Activated CD8-positive, alpha-beta T cell treated with anti-CD3 and anti-CD28 coated beads for 36 hours (primary cell): ENCODE measurements at regions of chr12 and their contacts with region 1.

Region 1: DNA sequence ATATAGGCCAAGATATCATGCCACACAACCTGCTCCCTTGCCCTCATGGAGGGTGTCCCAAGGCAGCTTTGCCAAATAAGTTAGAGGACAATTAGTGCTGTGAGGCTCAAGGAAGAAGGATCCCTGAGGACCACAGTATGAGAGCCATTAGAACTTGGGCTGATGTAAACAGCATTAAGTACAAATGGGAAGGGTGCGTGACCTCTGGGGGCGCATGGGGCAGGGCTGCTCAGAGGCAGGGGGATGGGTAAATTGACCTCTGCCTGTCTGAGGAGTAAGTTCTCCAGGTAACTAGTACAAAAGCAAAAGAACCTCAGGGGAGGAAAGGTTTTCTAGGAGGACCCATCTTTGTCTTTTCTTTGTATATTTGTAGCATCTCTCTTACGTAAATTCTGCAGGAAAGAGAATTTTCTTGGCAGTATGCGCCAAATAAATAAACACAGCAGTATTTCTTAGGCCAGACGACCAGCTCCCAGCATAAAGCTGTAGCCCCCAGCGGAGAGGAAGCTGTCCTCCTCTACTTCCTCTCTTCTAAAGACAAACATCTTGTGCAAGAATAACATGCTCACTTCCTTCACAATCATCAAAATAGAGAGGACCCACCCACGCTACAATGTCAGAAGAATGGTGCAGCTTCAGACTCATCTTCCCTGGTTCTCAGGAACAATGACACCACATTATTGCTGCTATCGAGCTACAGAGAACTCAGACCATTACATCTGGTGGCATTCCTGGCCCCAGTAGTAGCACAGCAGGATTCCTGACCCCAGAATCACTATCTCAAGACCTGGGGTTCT is 16.4 kb upstream of the VWF start:
- DNase-seq: peak; percentile 73
- ATAC-seq: peak; percentile 75
- H3K4me3 Mint-ChIP-seq: peak overlapping the region; percentile 54
- H3K27ac Mint-ChIP-seq: peak overlapping the region; percentile 95
- H3K4me1 Mint-ChIP-seq: peaks cover 47% of the 10 kb centered on the region
- H3K27me3 Mint-ChIP-seq: no peaks in the 10 kb centered on the region
- CTCF ChIP-seq: no peak

Region 2: DNA sequence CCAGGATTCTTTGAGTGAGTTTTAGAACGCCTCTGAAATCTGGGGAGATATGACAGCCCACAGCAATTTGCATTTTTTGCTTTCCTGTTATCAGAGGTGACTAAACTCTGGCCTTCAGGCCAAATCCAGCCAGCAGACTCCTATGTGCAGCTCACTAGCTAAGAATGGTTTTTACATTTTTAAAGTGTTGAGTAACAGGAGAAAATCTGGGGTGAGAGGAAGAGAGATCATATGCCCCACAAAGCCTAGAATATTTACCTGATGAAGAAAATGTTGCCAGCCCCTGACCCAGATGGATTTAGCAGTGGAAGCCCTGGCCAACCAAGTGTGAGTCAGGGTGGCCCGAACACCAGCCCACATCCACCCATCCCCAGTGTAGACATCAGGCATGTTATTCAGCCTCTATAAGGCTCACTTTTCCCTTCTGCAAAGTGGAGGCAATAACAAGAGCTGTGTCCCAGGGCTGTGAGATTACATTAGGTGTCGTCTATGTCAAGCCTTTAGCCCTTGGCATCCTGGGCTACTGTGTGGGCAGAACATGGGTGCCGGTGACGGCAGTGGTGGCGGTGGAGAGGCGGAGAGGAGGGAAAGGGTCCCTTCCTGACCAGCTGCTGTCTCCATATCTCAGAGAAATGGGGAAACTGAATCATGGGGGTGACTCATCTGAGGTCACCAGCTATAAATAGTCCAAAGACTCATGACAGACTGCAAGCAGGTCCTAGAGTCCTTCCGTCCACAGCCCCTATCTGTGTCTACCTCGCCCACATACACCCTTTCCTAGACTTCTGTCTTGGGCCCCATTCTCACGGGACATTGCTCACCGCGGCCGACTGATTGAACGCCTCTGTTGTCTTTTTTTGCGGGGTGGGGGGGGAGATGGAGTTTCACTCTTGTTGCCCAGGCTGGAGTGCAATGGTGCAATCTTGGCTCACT is 26.7 kb after region 1 on chr12:
- CTCF ChIA-PET with region 1: interaction called, 16 read pairs
- POLR2A ChIA-PET with region 1: interaction called, 3 read pairs
- intact Hi-C with region 1: no loop called
- DNase-seq: peak; percentile 90
- ATAC-seq: peak; percentile 87
- H3K4me3 Mint-ChIP-seq: peak overlapping the region; percentile 33
- H3K27ac Mint-ChIP-seq: peak overlapping the region; percentile 94
- H3K4me1 Mint-ChIP-seq: peaks cover 31% of the 10 kb centered on the region
- H3K27me3 Mint-ChIP-seq: no peaks in the 10 kb centered on the region
- CTCF ChIP-seq: no peak